Endothelial cell of umbilical vein (primary cell): ENCODE measurements at regions of chr12 and their contacts with region 1.

Region 1: DNA sequence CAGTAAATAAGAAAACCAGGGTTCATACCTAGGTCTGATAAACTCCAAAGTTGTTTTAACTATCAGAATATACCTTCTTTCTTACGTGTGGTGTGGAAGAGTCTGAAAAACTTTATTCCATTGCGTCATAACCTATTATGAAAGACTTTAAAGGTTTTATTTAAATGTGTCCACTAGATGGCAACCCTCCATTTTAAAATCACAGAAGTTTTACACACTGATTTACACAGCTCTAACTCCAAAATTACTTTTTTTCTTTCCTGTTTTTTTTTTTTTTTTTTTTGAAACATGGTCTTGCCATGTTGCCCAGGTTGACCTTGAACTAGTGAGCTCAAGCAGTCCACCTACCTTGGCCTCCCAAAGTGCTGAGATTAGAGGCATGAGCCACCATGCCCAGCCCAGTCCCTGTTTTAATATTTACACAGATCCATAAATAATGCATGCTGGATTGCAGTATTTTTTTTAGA is 17.3 kb upstream of the TMPRSS12 start:
- DNase-seq: peak; percentile 78
- H3K4me3 ChIP-seq: no peak overlapping the region
- H3K27ac ChIP-seq: no peak overlapping the region
- H3K4me1 ChIP-seq: no peaks in the 10 kb centered on the region
- H3K27me3 ChIP-seq: no peaks in the 10 kb centered on the region
- CTCF ChIP-seq: peak; percentile 24 to 25
- POLR2A ChIP-seq: no peak

Region 2: GRCh38 chr12:50924439-50925341 is 99.3 kb after region 1 on chr12:
- CTCF ChIA-PET with region 1: interaction called, 17 read pairs
- POLR2A ChIA-PET with region 1: no interaction called
- dilution Hi-C with region 1: no loop called
- intact Hi-C with region 1: no loop called
- DNase-seq: peak; percentile 94
- H3K4me3 ChIP-seq: peak overlapping the region; percentile 48 to 66 (median 55)
- H3K27ac ChIP-seq: peak overlapping the region; percentile 65
- H3K4me1 ChIP-seq: peaks cover 24% of the 10 kb centered on the region
- H3K27me3 ChIP-seq: no peaks in the 10 kb centered on the region
- CTCF ChIP-seq: no peak
- POLR2A ChIP-seq: no peak

Region 3: GRCh38 chr12:50986966-50987737 is 161.7 kb after region 1 on chr12:
- CTCF ChIA-PET with region 1: interaction called, 299 read pairs
- POLR2A ChIA-PET with region 1: interaction called, 3 read pairs
- dilution Hi-C with region 1: no loop called
- intact Hi-C with region 1: loop called (anchors 1 kb)
- DNase-seq: peak; percentile 81
- H3K4me3 ChIP-seq: no peak overlapping the region
- H3K27ac ChIP-seq: peak overlapping the region; percentile 15
- H3K4me1 ChIP-seq: peaks cover 41% of the 10 kb centered on the region
- H3K27me3 ChIP-seq: no peaks in the 10 kb centered on the region
- CTCF ChIP-seq: peak; percentile 28 to 53
- POLR2A ChIP-seq: no peak

Region 4: DNA sequence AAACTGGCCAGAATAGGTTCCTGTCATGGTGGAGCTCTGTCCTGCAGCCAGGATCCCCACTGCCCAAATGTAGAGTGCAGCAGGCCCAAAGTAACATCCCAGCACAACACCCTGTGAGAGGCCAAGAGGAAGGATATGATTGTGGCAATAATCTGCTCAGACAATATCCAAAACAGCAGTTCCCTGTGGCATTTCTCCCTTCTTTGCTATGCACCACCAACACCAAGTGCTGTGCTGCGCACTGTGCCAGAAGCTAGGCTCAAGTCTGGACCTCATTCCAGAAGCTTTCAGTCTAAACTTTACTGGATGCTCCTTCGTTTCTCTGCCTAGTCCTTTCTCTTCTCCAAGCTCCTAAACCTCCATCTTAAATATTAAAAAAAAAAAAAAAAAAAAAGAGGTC is 167.4 kb after region 1 on chr12:
- CTCF ChIA-PET with region 1: interaction called, 299 read pairs
- POLR2A ChIA-PET with region 1: no interaction called
- dilution Hi-C with region 1: no loop called
- intact Hi-C with region 1: no loop called
- DNase-seq: peak; percentile 30
- H3K4me3 ChIP-seq: no peak overlapping the region
- H3K27ac ChIP-seq: no peak overlapping the region
- H3K4me1 ChIP-seq: peaks cover 14% of the 10 kb centered on the region
- H3K27me3 ChIP-seq: no peaks in the 10 kb centered on the region
- CTCF ChIP-seq: no peak
- POLR2A ChIP-seq: no peak

Region 5: DNA sequence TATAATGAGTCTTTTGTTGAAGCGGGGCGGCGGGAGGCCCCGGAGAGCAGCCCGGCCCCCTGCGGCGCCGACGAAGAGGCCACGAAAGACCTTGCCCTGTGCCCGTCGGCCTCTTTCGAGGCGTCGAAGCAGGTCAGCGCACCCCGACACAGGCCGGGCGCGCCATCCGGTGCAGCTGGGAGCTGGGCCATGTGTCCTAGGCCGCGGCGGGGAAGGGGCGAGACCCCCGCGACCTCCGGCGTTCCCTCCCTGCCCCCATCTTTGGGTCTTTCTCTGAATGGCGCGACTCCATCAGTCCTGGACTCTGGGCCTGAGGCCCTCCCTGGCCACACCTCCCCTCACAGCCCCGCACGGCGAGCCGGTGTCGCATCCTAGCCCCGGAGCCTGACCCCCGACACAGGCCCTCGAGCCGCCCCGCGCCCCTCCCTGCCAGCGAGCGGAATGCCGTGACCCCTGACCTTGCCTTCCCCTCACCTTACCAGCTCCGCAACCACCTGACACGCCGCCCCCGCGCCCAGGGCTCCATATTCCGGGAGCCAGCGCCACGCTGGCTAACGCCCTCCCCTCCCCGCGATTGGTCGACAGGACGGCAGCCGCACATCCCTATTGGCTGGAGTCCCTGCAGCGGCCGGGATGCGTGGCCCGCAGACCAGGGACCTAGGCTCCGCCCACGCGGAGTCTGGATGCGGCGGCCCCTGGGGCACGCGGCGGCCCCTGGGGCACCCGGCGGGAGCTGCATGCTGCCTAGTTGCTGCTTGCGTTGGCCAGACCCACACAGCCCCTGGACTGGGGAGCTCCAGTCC is 200.6 kb after region 1 on chr12 and contains the start of gene SLC11A2:
- CTCF ChIA-PET with region 1: interaction called, 32 read pairs
- POLR2A ChIA-PET with region 1: no interaction called
- dilution Hi-C with region 1: no loop called
- intact Hi-C with region 1: loop called (anchors 1 kb)
- DNase-seq: peak; percentile 95
- H3K4me3 ChIP-seq: peak within 1 kb of the TSS; percentile 64 to 79 (median 78)
- H3K27ac ChIP-seq: peak within 1 kb of the TSS; percentile 90
- H3K4me1 ChIP-seq: peaks cover 17% of the 10 kb centered on the region
- H3K27me3 ChIP-seq: peaks cover 5 to 7% of the 10 kb centered on the region in 2 experiments
- CTCF ChIP-seq: peak in 1 of 2 donors; percentile 31
- POLR2A ChIP-seq: peak; percentile 73
- total RNA-seq, gene SLC11A2: 41.1 and 56.4 TPM in 2 replicates

Region 6: DNA sequence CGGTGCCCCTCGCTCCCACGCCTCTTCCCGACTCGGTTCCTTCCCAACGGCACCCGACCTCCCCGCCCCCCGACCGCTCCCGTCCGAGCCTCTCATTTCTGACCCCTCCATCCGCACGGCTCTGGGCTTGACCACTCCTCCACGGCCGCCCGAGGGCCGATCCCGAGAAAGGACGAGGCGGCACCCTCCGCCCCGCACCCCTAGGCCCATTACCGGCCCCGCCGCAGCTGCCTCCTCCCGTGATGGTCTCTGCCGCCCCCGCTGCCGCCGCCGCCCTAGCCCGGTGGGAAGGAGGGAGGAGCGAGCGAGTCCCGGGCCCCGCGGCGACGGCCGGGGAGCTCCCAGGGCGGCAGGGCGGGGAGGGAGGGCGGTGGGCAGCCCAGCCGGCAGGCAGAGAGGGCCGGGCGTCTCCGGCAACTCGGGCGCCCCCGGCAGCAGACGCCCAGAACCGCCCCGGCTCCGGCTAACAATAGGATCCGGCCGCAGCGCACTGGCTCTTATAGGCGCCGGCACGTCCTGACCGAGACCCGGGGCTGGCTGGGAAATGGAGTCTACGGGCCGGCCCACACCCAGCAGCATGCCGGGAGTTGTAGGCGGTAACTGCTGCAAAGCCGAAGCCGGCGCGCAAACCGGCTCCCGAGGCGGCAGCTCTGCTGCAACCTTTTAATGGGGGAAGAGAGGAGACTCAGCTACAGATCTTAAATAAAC is 257.9 kb after region 1 on chr12 and contains the start of gene CSRNP2:
- CTCF ChIA-PET with region 1: no interaction called
- POLR2A ChIA-PET with region 1: interaction called, 6 read pairs
- dilution Hi-C with region 1: no loop called
- intact Hi-C with region 1: loop called (anchors 5 kb)
- DNase-seq: peak; percentile 94
- H3K4me3 ChIP-seq: peak within 1 kb of the TSS; percentile 77 to 98 (median 78)
- H3K27ac ChIP-seq: peak within 1 kb of the TSS; percentile 64
- H3K4me1 ChIP-seq: peaks cover 12% of the 10 kb centered on the region
- H3K27me3 ChIP-seq: no peaks in the 10 kb centered on the region
- CTCF ChIP-seq: peak in 1 of 2 donors; percentile 19
- POLR2A ChIP-seq: peak; percentile 100
- total RNA-seq, gene CSRNP2: 42.1 and 49.7 TPM in 2 replicates

Region 7: DNA sequence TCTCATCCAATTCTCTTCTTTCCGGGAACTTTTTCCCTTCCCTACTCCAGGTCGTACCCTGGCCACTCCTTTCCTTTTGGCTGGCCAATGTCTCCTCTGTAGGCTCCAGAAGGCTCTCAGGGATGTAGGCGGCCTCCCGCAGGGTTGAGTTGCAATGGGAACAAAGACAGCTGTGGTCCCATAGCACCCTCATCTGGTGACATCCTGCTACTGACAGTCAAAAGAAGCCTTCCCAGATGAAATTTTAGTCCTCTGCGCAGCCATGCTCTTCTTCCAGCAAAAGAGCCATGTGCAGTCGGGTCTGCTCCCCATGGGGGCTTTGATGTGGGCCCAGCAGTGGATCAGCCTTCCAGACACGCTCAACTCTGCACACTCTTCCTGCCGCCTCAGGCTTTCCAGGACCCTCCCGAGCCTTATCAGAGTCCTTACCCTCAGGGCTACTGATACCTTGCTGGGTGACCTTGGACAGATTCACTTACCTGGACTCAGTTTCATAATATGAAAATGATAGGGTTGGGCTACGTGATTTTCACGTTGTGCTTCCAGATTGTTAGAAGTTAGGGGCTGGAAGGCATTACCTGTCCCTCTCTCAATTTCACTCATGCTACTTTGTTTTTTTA is 526.6 kb after region 1 on chr12:
- CTCF ChIA-PET with region 1: interaction called, 15 read pairs
- POLR2A ChIA-PET with region 1: no interaction called
- dilution Hi-C with region 1: no loop called
- intact Hi-C with region 1: loop called (anchors 1 kb)
- DNase-seq: peak; percentile 66
- H3K4me3 ChIP-seq: no peak overlapping the region
- H3K27ac ChIP-seq: no peak overlapping the region
- H3K4me1 ChIP-seq: no peaks in the 10 kb centered on the region
- H3K27me3 ChIP-seq: no peaks in the 10 kb centered on the region
- CTCF ChIP-seq: peak; percentile 66 to 80
- POLR2A ChIP-seq: peak; percentile 24